OCI-LY7 (cell line): ENCODE measurements at regions of chr12 and their contacts with region 1.

Region 1: DNA sequence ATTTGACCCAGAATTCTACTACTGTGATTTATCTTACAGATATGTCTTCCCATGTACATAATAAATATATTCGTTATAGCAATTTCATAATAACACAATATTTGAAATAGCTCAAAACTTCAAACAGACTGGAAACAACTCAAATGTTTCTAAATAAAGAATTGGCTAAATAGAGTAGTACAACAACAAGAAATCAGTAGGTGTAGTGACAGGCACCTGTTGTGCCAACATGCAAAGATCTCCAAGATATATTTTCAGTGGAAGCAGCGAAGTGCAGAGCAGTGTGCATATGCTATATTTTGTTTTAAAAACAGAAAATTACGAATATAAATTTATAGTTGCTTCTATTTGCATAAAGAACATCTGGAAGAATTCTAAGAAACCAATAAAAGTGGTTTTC is 60.9 kb downstream of the GRIP1 start:
- DNase-seq: peak; percentile 71
- H3K4me3 ChIP-seq: peak overlapping the region; percentile 56
- H3K27ac ChIP-seq: peak overlapping the region; percentile 100
- H3K4me1 ChIP-seq: peaks cover 100% of the 10 kb centered on the region
- CTCF ChIP-seq: no peak

Region 2: GRCh38 chr12:66169221-66170170 is 448.5 kb before region 1 on chr12 and contains the start of gene TMBIM4:
- CTCF ChIA-PET with region 1: no interaction called
- POLR2A ChIA-PET with region 1: interaction called, 6 read pairs
- intact Hi-C with region 1: loop called (anchors 5 kb)
- DNase-seq: peak; percentile 91
- H3K4me3 ChIP-seq: peak within 1 kb of the TSS; percentile 80
- H3K27ac ChIP-seq: peak within 1 kb of the TSS; percentile 93
- H3K4me1 ChIP-seq: peaks cover 23% of the 10 kb centered on the region
- CTCF ChIP-seq: peak; percentile 73
- total RNA-seq, gene TMBIM4: 16.0 and 19.2 TPM in 2 replicates

Region 3: GRCh38 chr12:66352197-66352596 is 265.8 kb before region 1 on chr12:
- CTCF ChIA-PET with region 1: no interaction called
- POLR2A ChIA-PET with region 1: no interaction called
- intact Hi-C with region 1: loop called (anchors 2 kb)
- DNase-seq: peak; percentile 67
- H3K4me3 ChIP-seq: no peak overlapping the region
- H3K27ac ChIP-seq: no peak overlapping the region
- H3K4me1 ChIP-seq: no peaks in the 10 kb centered on the region
- CTCF ChIP-seq: peak; percentile 70

Region 4: DNA sequence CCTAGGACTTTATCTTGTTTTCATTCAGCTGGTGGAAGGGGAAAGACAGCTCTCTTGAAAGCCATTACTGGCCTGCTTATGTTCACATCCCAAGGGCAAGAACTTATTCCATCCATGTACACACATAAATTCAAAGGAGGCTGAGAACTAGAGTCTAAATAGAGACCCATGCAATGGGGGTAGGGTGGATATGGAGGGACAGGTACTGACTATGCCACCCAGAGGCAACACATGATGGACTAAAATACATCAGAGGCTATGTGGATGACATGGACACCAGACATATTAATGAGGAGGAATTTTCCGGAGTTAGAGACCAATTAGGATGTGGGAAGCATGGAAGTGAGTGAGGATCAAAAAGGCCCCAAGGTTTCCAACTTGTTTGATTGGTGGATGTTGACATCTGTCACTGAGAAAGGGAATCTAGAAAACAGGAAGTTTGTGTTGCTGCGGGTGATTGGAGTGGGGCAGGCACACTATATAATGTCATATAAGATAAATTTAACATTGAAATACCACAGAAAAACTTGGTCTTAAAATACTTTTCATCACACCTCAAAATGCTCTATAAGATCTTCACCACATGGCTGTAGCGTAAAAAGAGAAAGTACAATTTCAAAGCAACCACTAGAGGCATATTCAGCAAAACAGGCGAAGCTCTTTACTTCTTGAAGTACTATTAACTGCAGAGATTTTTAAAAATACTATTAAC is 69.5 kb before region 1 on chr12:
- CTCF ChIA-PET with region 1: no interaction called
- POLR2A ChIA-PET with region 1: interaction called, 10 read pairs
- intact Hi-C with region 1: loop called (anchors 1 kb)
- DNase-seq: peak; percentile 59
- H3K4me3 ChIP-seq: no peak overlapping the region
- H3K27ac ChIP-seq: no peak overlapping the region
- H3K4me1 ChIP-seq: peaks cover 34% of the 10 kb centered on the region
- CTCF ChIP-seq: peak; percentile 86

Region 5: DNA sequence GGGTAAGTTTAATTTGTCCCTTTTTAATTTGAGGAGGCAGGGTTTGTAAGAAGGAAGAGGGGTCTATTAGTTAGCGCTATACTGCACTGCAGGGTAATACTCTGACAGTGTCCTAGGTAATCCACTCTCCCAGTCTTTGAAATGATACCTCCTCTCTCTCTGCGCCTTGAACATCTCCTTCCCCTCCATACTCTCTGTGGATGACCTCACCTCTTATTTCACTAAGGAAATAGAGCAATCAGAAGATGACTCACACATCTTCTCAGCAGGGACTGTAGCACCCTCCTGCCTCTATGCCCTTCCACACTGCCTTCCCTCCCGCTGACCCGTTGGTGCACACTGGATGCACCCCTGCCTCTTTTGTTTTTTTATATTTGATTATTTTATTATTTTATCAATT is 33.3 kb before region 1 on chr12:
- CTCF ChIA-PET with region 1: no interaction called
- POLR2A ChIA-PET with region 1: no interaction called
- intact Hi-C with region 1: no loop called
- DNase-seq: no peak
- H3K4me3 ChIP-seq: no peak overlapping the region
- H3K27ac ChIP-seq: no peak overlapping the region
- H3K4me1 ChIP-seq: peaks cover 41% of the 10 kb centered on the region
- CTCF ChIP-seq: no peak

Region 6: GRCh38 chr12:66688846-66689439 is 71.0 kb after region 1 on chr12:
- CTCF ChIA-PET with region 1: no interaction called
- POLR2A ChIA-PET with region 1: interaction called, 9 read pairs
- intact Hi-C with region 1: loop called (anchors 1 kb)
- DNase-seq: peak; percentile 90
- H3K4me3 ChIP-seq: no peak overlapping the region
- H3K27ac ChIP-seq: peak overlapping the region; percentile 0
- H3K4me1 ChIP-seq: peaks cover 68% of the 10 kb centered on the region
- CTCF ChIP-seq: peak; percentile 95

Region 7: DNA sequence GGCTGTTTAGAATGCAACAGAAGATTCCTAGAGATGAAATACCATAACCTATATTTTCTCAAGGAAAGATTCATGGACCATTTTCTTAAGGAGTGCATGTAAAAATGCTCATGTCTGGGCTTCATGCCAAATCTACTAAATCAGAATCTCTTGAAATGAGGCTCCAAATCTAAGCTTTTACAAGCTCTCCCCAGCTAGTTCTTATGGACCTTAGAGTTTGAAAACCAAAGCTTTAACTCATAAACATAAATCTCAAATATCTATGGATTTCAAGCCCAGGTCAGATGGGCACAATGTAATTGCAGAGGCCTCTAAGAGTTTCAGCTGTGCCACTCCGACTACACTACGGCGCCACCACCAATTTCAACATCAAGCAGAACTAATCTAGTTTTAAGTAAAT is 533.9 kb after region 1 on chr12:
- CTCF ChIA-PET with region 1: no interaction called
- POLR2A ChIA-PET with region 1: no interaction called
- intact Hi-C with region 1: no loop called
- DNase-seq: no peak
- H3K4me3 ChIP-seq: no peak overlapping the region
- H3K27ac ChIP-seq: no peak overlapping the region
- H3K4me1 ChIP-seq: no peaks in the 10 kb centered on the region
- CTCF ChIP-seq: no peak